CD8-positive, alpha-beta memory T cell (primary cell): ENCODE measurements at regions of chr10 and their contacts with region 1.

Region 1: GRCh38 chr10:54854389-54854788 is 53.4 kb upstream of the PCDH15 start:
- DNase-seq: peak in 1 of 5 donors; percentile 20
- H3K4me3 ChIP-seq: no peak overlapping the region
- H3K4me3 Mint-ChIP-seq: no peak overlapping the region
- H3K27ac ChIP-seq: no peak overlapping the region
- H3K27ac Mint-ChIP-seq: no peak overlapping the region
- H3K4me1 ChIP-seq: no peaks in the 10 kb centered on the region
- H3K4me1 Mint-ChIP-seq: no peaks in the 10 kb centered on the region
- H3K27me3 ChIP-seq: no peaks in the 10 kb centered on the region
- H3K27me3 Mint-ChIP-seq: no peaks in the 10 kb centered on the region

Region 2: GRCh38 chr10:54869022-54869421 is 14.6 kb after region 1 on chr10:
- CTCF ChIA-PET with region 1: no interaction called
- POLR2A ChIA-PET with region 1: no interaction called
- DNase-seq: no peak
- H3K4me3 ChIP-seq: no peak overlapping the region
- H3K4me3 Mint-ChIP-seq: no peak overlapping the region
- H3K27ac ChIP-seq: no peak overlapping the region
- H3K27ac Mint-ChIP-seq: no peak overlapping the region
- H3K4me1 ChIP-seq: no peaks in the 10 kb centered on the region
- H3K4me1 Mint-ChIP-seq: no peaks in the 10 kb centered on the region
- H3K27me3 ChIP-seq: no peaks in the 10 kb centered on the region
- H3K27me3 Mint-ChIP-seq: no peaks in the 10 kb centered on the region

Region 3: DNA sequence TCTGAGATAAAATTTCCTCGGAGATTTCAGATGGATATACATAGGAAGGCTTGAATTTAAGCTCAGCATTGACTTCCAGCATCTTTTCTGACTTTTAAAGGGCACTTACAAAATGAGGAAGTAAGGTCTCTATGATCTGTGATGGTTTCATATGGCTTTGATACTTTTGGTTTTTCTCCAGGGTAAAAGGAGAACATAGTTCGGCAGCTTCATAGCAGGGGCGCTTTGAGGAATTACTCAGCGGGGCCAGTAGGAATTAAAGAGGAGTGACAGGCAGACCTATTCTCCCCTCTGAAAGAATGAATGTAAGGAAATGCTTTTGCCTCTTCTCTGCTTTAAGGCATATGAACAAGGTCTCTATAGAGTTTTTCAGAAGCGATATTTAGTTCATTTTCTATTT is 26.6 kb after region 1 on chr10:
- CTCF ChIA-PET with region 1: no interaction called
- POLR2A ChIA-PET with region 1: no interaction called
- DNase-seq: no peak
- H3K4me3 ChIP-seq: no peak overlapping the region
- H3K4me3 Mint-ChIP-seq: no peak overlapping the region
- H3K27ac ChIP-seq: no peak overlapping the region
- H3K27ac Mint-ChIP-seq: no peak overlapping the region
- H3K4me1 ChIP-seq: no peaks in the 10 kb centered on the region
- H3K4me1 Mint-ChIP-seq: no peaks in the 10 kb centered on the region
- H3K27me3 ChIP-seq: no peaks in the 10 kb centered on the region
- H3K27me3 Mint-ChIP-seq: no peaks in the 10 kb centered on the region

Region 4: DNA sequence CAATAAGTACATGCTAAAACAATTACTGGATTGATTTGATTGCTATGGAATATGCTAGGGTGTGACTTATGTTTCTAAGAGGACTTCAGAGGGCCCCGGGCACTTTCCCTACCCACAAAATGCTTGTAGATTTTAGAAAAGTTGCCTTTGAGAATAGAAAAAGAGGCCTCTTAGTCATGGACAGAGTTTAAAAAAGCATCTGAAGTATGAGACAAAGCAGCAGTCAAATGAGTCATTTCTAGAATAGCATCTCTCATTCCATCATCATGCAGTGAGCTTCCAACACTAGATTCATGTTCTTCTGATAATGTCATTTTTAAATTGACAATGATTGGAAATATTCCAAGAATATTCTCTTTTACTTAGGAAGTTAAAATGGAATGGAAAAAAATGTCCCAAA is 621.7 kb after region 1 on chr10:
- CTCF ChIA-PET with region 1: no interaction called
- POLR2A ChIA-PET with region 1: interaction called, 11 read pairs
- DNase-seq: no peak
- H3K4me3 ChIP-seq: no peak overlapping the region
- H3K4me3 Mint-ChIP-seq: no peak overlapping the region
- H3K27ac ChIP-seq: no peak overlapping the region
- H3K27ac Mint-ChIP-seq: no peak overlapping the region
- H3K4me1 ChIP-seq: no peaks in the 10 kb centered on the region
- H3K4me1 Mint-ChIP-seq: no peaks in the 10 kb centered on the region
- H3K27me3 ChIP-seq: no peaks in the 10 kb centered on the region
- H3K27me3 Mint-ChIP-seq: no peaks in the 10 kb centered on the region